CD4-positive, alpha-beta T cell (primary cell): ENCODE measurements at regions of chr3 and their contacts with region 1.

Region 1: DNA sequence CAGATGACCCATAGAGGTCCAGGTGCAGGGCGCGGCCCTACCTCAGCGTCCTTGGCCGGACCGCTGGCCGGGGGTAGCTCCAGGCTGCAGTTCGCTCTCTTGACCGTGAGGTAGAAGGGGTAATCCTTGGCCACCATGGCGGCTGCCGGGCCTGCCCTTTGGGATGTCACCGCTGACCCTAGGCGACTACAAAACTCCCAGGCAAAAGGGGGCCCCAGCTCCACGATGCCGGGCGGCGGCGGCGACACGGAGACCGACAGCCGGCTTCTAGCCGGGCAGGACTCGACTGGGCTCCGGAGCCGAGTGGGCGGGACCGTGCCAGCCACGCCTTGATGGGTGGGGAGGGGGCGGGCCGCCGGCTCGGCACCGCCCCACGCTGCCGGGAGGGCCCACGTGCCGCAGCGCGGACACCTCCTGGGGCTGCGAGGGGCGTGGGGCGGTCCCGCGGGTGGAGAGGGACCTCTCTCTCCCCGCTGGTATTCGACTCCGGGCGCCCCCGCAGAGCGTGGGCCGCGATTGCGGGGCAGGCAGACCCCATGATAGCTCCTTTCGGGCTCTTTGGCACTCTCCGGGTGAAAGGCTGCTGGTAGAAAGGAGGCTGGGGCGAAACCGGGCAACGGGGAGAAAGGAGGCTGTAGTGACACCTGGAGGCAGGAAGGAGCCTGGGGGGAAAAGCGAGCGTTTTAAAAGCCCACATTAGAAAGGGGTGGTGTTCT is at the start of gene ARHGEF3:
- DNase-seq: peak; percentile 76 to 94 (median 87)
- ATAC-seq: peak; percentile 76
- H3K4me3 ChIP-seq: peak within 1 kb of the TSS; percentile 98
- H3K4me3 Mint-ChIP-seq: peak within 1 kb of the TSS; percentile 95
- H3K27ac ChIP-seq: peak within 1 kb of the TSS; percentile 75 to 82
- H3K27ac Mint-ChIP-seq: peak within 1 kb of the TSS; percentile 89
- H3K4me1 ChIP-seq: peaks cover 23% of the 10 kb centered on the region
- H3K4me1 Mint-ChIP-seq: peaks cover 57% of the 10 kb centered on the region
- H3K27me3 ChIP-seq: no peaks in the 10 kb centered on the region
- H3K27me3 Mint-ChIP-seq: no peaks in the 10 kb centered on the region
- CTCF ChIP-seq: peak; percentile 72
- total RNA-seq, gene ARHGEF3: 46.4 to 46.6 TPM

Region 2: DNA sequence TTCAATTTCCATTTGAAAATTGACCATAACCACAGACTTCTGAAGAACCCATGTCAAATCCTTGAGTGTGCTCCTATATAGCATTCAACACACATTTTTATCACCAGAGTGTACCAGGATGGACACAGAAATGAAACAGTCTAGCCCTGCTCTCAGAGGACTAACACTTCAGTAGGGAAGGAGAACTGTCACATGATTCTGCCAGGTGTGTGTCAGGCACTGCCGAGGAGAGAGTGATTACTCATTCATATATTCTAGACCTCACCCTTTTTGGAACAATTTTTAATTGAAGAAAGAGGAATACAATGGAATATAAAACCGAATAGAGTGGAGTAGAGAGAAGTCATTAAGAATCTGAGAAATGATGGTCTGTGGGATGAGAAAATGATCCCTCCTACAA is 459.3 kb before region 1 on chr3:
- CTCF ChIA-PET with region 1: no interaction called
- POLR2A ChIA-PET with region 1: no interaction called
- intact Hi-C with region 1: loop called in 1 of 2 experiments (anchors 5 kb)
- DNase-seq: no peak
- ATAC-seq: no peak
- H3K4me3 ChIP-seq: no peak overlapping the region
- H3K4me3 Mint-ChIP-seq: no peak overlapping the region
- H3K27ac ChIP-seq: no peak overlapping the region
- H3K27ac Mint-ChIP-seq: no peak overlapping the region
- H3K4me1 ChIP-seq: no peaks in the 10 kb centered on the region
- H3K4me1 Mint-ChIP-seq: no peaks in the 10 kb centered on the region
- H3K27me3 ChIP-seq: peaks cover 0 to 5% of the 10 kb centered on the region in 2 experiments
- H3K27me3 Mint-ChIP-seq: peaks cover 38% of the 10 kb centered on the region
- CTCF ChIP-seq: no peak

Region 3: GRCh38 chr3:56693750-56694149 is 108.1 kb before region 1 on chr3:
- CTCF ChIA-PET with region 1: interaction called, 5 read pairs
- POLR2A ChIA-PET with region 1: interaction called, 32 read pairs
- intact Hi-C with region 1: no loop called
- DNase-seq: peak in 3 of 14 experiments; percentile 30 to 34 (median 32)
- ATAC-seq: no peak
- H3K4me3 ChIP-seq: no peak overlapping the region
- H3K4me3 Mint-ChIP-seq: peak overlapping the region; percentile 61
- H3K27ac ChIP-seq: peak overlapping the region; percentile 16 to 42
- H3K27ac Mint-ChIP-seq: peak overlapping the region; percentile 76
- H3K4me1 ChIP-seq: peaks cover 30% of the 10 kb centered on the region
- H3K4me1 Mint-ChIP-seq: peaks cover 44% of the 10 kb centered on the region
- H3K27me3 ChIP-seq: no peaks in the 10 kb centered on the region
- H3K27me3 Mint-ChIP-seq: no peaks in the 10 kb centered on the region
- CTCF ChIP-seq: no peak

Region 4: DNA sequence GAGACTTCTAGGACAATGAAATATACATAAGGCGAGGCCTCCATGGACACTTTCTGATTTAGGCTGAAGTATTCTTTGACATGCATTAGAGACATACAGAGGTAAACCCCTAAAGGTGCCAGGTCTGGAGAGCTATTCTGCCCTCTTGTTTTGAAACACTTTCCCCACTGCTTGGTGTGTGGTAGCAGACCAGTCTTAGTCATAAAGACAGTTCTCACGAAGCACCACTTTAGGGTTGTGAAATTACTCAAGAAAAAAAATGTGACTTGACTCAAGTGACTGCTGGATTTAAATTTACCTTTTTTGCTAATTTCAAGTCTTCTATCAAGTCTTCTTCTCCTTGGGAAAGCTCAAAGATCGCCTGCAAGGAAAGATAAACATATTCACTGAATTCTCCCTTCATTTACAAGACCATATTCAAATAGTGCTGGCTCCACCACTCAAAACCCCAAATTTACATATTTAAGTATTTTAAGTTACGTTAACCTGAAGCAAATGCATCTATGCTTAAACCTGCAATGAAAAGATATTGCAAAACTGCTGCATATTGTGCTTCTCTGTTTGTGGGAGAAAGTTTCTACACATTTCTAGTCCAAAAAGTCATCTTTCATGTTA is 48.5 kb before region 1 on chr3:
- CTCF ChIA-PET with region 1: interaction called, 25 read pairs
- POLR2A ChIA-PET with region 1: interaction called, 93 read pairs
- intact Hi-C with region 1: loop called (anchors 2 kb)
- DNase-seq: peak in 6 of 14 experiments; percentile 11 to 53 (median 24)
- ATAC-seq: no peak
- H3K4me3 ChIP-seq: no peak overlapping the region
- H3K4me3 Mint-ChIP-seq: peak overlapping the region; percentile 56
- H3K27ac ChIP-seq: peak overlapping the region; percentile 18 to 31
- H3K27ac Mint-ChIP-seq: peak overlapping the region; percentile 96
- H3K4me1 ChIP-seq: peaks cover 43% of the 10 kb centered on the region
- H3K4me1 Mint-ChIP-seq: peaks cover 69% of the 10 kb centered on the region
- H3K27me3 ChIP-seq: no peaks in the 10 kb centered on the region
- H3K27me3 Mint-ChIP-seq: no peaks in the 10 kb centered on the region
- CTCF ChIP-seq: no peak

Region 5: GRCh38 chr3:56775838-56776555 is 25.8 kb before region 1 on chr3:
- CTCF ChIA-PET with region 1: interaction called, 114 read pairs
- POLR2A ChIA-PET with region 1: interaction called, 251 read pairs
- intact Hi-C with region 1: no loop called
- DNase-seq: no peak
- ATAC-seq: no peak
- H3K4me3 ChIP-seq: no peak overlapping the region
- H3K4me3 Mint-ChIP-seq: peak overlapping the region; percentile 34
- H3K27ac ChIP-seq: no peak overlapping the region
- H3K27ac Mint-ChIP-seq: peak overlapping the region; percentile 71
- H3K4me1 ChIP-seq: peaks cover 57% of the 10 kb centered on the region
- H3K4me1 Mint-ChIP-seq: peaks cover 91% of the 10 kb centered on the region
- H3K27me3 ChIP-seq: no peaks in the 10 kb centered on the region
- H3K27me3 Mint-ChIP-seq: no peaks in the 10 kb centered on the region
- CTCF ChIP-seq: no peak

Region 6: GRCh38 chr3:56812754-56813650 is 11.2 kb after region 1 on chr3:
- CTCF ChIA-PET with region 1: interaction called, 11 read pairs
- POLR2A ChIA-PET with region 1: interaction called, 47 read pairs
- intact Hi-C with region 1: no loop called
- DNase-seq: no peak
- ATAC-seq: no peak
- H3K4me3 ChIP-seq: no peak overlapping the region
- H3K4me3 Mint-ChIP-seq: peak overlapping the region; percentile 70
- H3K27ac ChIP-seq: peak overlapping the region; percentile 3 to 69
- H3K27ac Mint-ChIP-seq: peak overlapping the region; percentile 80
- H3K4me1 ChIP-seq: peaks cover 48% of the 10 kb centered on the region
- H3K4me1 Mint-ChIP-seq: peaks cover 84% of the 10 kb centered on the region
- H3K27me3 ChIP-seq: no peaks in the 10 kb centered on the region
- H3K27me3 Mint-ChIP-seq: no peaks in the 10 kb centered on the region
- CTCF ChIP-seq: no peak

Region 7: DNA sequence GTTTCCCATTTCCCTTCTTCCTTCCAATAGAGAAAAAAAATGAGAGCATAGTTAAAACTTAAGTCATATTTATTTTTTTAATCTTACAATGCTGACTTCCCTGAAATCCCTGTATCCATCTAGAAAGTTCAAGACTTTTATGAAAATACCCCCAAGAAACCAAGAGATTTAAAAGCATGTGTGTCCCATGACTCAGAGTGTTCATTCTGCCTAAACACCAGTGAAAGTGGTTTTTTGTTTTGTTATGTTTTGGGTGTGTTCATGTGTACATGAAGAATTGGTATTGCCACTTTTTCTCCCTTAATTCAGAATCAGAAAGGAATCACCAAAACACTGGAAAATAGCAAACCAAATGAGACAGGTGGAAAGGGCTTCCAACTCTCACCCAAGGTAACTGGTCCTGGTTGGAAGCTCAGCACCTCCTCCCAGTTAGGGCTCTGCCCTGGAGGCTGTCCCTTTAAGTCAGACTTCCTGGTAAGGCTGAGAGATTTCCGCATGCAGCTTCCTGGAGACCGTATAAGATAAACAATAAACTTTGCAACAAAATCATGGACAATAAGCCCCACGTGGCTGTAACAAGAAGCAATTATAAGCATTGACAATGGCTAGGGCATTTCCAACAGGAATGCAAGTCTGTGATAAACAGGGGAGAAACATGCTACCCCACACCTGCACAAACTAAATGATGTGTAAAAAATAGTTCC is 121.9 kb after region 1 on chr3:
- CTCF ChIA-PET with region 1: interaction called, 7 read pairs
- POLR2A ChIA-PET with region 1: interaction called, 91 read pairs
- intact Hi-C with region 1: loop called in 1 of 2 experiments (anchors 5 kb)
- DNase-seq: peak; percentile 30 to 88 (median 45)
- ATAC-seq: peak; percentile 83
- H3K4me3 ChIP-seq: no peak overlapping the region
- H3K4me3 Mint-ChIP-seq: peak overlapping the region; percentile 69
- H3K27ac ChIP-seq: peak overlapping the region; percentile 72 to 91
- H3K27ac Mint-ChIP-seq: peak overlapping the region; percentile 94
- H3K4me1 ChIP-seq: peaks cover 77% of the 10 kb centered on the region
- H3K4me1 Mint-ChIP-seq: peaks cover 87% of the 10 kb centered on the region
- H3K27me3 ChIP-seq: no peaks in the 10 kb centered on the region
- H3K27me3 Mint-ChIP-seq: no peaks in the 10 kb centered on the region
- CTCF ChIP-seq: no peak